GM13977 (cell line): ENCODE measurements at regions of chr10 and their contacts with region 1.

Region 1: GRCh38 chr10:74234569-74234968 is 83.5 kb downstream of the ADK start:
- DNase-seq: no peak
- CTCF ChIP-seq: peak; percentile 39

Region 2: DNA sequence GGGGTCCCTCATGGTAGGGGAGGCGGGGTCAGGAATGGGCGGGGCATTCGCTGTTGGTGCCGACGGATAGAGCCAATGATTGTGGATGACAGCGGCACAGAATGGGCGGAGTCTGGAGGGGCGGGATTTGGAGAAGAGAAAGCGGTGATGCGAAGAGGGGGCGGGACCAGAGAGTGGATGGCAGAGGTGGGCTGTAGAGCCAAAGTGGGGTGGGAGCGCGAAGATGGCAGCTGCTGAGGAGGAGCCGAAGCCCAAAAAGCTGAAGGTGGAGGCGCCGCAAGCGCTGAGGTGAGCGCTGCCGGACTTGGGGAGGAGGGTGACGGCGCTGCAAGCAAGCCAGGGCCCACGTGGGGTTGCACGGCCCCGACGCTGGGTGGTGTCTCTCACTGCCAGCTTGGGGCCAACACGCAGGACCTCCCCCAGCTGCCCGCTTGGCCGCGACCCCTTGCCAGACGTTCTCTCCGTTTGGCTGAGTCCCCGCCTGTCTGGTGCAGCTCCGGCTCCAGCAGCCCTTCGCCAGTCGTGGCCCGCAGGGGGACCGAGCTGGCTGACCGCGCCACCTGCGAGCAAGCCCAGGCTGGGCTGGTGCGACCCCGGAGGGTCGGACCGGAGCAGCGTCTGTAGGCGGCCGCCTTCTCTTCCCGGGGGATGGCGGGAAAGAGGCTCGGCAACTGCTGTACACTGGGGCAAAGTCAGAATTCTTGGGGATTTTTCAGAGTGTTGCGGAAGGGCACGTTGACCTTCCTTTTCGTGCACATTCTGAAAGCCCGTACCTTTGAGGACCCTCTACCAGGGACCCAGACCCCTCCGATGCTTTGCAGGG is 83.3 kb before region 1 on chr10 and contains the start of gene ADK:
- in situ Hi-C with region 1: loop called (anchors 5 kb)
- DNase-seq: peak; percentile 99
- CTCF ChIP-seq: peak; percentile 27

Region 3: GRCh38 chr10:74282151-74282850 is 47.7 kb after region 1 on chr10:
- in situ Hi-C with region 1: no loop called
- DNase-seq: no peak
- CTCF ChIP-seq: no peak